G401 (cell line): ENCODE measurements at regions of chr11 and their contacts with region 1.

Region 1: GRCh38 chr11:62444236-62444833 is 25.5 kb downstream of the SCGB1A1 start:
- DNase-seq: peak; percentile 72

Region 2: GRCh38 chr11:62497132-62497915 is 53.0 kb after region 1 on chr11:
- in situ Hi-C with region 1: loop called (anchors 10 kb)
- DNase-seq: peak; percentile 51

Region 3: GRCh38 chr11:62532096-62532495 is 87.8 kb after region 1 on chr11:
- in situ Hi-C with region 1: no loop called
- DNase-seq: no peak

Region 4: DNA sequence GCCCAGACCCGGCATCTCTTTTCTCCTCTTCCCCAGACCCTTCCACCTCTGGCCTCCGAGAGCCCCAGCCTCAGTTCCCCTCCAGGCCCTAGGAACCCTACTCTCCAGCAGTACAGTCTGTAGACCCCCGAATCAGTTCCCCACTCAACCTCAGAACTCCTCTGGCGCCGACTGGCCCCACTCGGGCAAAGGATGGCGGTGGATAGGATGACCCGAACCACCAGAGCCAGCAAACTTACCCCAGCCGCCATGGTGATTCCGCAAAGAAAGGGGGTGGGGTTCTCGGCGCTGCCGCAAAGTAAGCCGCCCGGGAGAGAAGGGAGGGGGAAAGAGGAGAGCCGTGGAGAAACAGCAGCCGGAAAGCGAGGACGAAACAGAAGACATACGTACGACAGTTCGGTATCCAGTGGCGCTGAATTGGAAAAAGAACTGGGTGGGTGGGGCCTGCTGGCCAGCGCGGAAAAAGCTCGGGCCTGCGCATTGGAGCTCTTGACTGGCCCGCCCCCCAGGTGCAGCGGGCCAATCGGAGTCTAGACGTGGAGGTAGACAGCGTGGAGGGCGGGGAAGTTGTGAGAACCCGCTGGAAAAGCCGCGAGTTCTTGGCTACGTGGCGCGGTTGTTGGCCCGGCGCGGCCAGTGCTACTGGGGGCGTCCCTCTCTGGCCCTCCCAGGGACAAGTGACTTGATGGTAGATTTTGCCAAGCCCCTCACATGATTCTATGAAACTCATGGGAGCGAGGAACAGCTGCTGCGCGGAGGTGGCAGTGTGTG is 129.4 kb after region 1 on chr11 and contains the start of gene EEF1G:
- in situ Hi-C with region 1: loop called (anchors 25 kb)
- DNase-seq: peak; percentile 100
- total RNA-seq, gene EEF1G: 3,525 and 3,828 TPM in 2 replicates